CD4-positive, alpha-beta T cell (primary cell): ENCODE measurements at regions of chr9 and their contacts with region 1.

Region 1: GRCh38 chr9:37746848-37747753 is 6.5 kb upstream of the TRMT10B start:
- DNase-seq: peak; percentile 22 to 73 (median 44)
- ATAC-seq: peak; percentile 97
- H3K4me3 ChIP-seq: no peak overlapping the region
- H3K4me3 Mint-ChIP-seq: no peak overlapping the region
- H3K27ac ChIP-seq: no peak overlapping the region
- H3K27ac Mint-ChIP-seq: no peak overlapping the region
- H3K4me1 ChIP-seq: no peaks in the 10 kb centered on the region
- H3K4me1 Mint-ChIP-seq: peaks cover 3% of the 10 kb centered on the region
- H3K27me3 ChIP-seq: no peaks in the 10 kb centered on the region
- H3K27me3 Mint-ChIP-seq: no peaks in the 10 kb centered on the region
- CTCF ChIP-seq: peak; percentile 89

Region 2: DNA sequence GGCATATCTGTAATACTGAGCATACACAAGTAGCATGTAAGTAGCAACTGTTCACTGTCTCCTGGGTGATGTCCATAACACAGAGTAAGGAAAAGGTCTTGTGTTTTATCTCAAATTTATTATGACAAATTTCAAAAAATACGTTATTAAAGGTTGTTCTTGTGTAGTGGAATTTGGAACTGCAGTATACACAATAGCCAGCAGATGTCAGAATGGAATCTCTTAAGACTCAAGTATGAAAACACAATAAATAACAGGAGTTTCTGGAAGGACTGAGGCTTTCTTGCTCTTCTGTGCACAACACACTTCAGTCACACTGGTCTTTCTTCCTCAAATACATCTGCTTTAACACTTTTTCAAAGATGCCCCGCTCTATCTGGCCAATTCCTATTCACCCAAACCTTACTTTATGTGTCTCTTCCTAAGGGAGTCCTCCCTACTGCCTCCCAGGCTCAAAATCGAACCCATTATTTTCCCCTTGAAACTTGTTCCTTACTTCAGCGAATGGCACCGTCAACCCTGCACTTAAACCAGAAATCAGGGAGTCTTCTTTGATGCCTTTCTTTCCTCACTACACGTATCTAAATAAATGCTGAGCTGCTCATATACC is 164.4 kb before region 1 on chr9:
- CTCF ChIA-PET with region 1: no interaction called
- POLR2A ChIA-PET with region 1: no interaction called
- intact Hi-C with region 1: loop called in 1 of 2 experiments (anchors 5 kb)
- DNase-seq: peak in 3 of 14 experiments; percentile 45 to 63 (median 62)
- ATAC-seq: peak; percentile 79
- H3K4me3 ChIP-seq: no peak overlapping the region
- H3K4me3 Mint-ChIP-seq: no peak overlapping the region
- H3K27ac ChIP-seq: no peak overlapping the region
- H3K27ac Mint-ChIP-seq: no peak overlapping the region
- H3K4me1 ChIP-seq: no peaks in the 10 kb centered on the region
- H3K4me1 Mint-ChIP-seq: peaks cover 18% of the 10 kb centered on the region
- H3K27me3 ChIP-seq: no peaks in the 10 kb centered on the region
- H3K27me3 Mint-ChIP-seq: no peaks in the 10 kb centered on the region
- CTCF ChIP-seq: peak; percentile 69

Region 3: GRCh38 chr9:38362852-38363593 is 615.9 kb after region 1 on chr9:
- CTCF ChIA-PET with region 1: no interaction called
- POLR2A ChIA-PET with region 1: no interaction called
- intact Hi-C with region 1: loop called in 1 of 2 experiments (anchors 2 kb)
- DNase-seq: peak in 5 of 14 experiments; percentile 7 to 61 (median 27)
- ATAC-seq: peak; percentile 83
- H3K4me3 ChIP-seq: peak overlapping the region; percentile 24
- H3K4me3 Mint-ChIP-seq: peak overlapping the region; percentile 46
- H3K27ac ChIP-seq: no peak overlapping the region
- H3K27ac Mint-ChIP-seq: no peak overlapping the region
- H3K4me1 ChIP-seq: no peaks in the 10 kb centered on the region
- H3K4me1 Mint-ChIP-seq: peaks cover 7% of the 10 kb centered on the region
- H3K27me3 ChIP-seq: no peaks in the 10 kb centered on the region
- H3K27me3 Mint-ChIP-seq: peaks cover 4% of the 10 kb centered on the region
- CTCF ChIP-seq: no peak